Spleen (tissue), 13 donors: ENCODE measurements at regions of chr4 and their contacts with region 1.

Region 1: GRCh38 chr4:15231265-15232091 is 196.4 kb upstream of the C1QTNF7 start:
- DNase-seq: peak; percentile 83
- H3K4me3 ChIP-seq: no peak overlapping the region
- H3K27ac ChIP-seq: no peak overlapping the region
- H3K4me1 ChIP-seq: peaks cover 18 to 38% (median 28%) of the 10 kb centered on the region in 6 donors
- H3K27me3 ChIP-seq: no peaks in the 10 kb centered on the region
- CTCF ChIP-seq: peak; percentile 56 to 85 (median 75)
- POLR2A ChIP-seq: no peak

Region 2: GRCh38 chr4:15457406-15458201 is 226.1 kb after region 1 on chr4:
- intact Hi-C with region 1: loop called (anchors 5 kb)
- DNase-seq: no peak
- H3K4me3 ChIP-seq: peak overlapping the region in 1 of 8 donors; percentile 33
- H3K27ac ChIP-seq: peak overlapping the region in 4 of 8 donors; percentile 31 to 53 (median 44)
- H3K4me1 ChIP-seq: peaks cover 0 to 20% (median 12%) of the 10 kb centered on the region in 6 donors
- H3K27me3 ChIP-seq: no peaks in the 10 kb centered on the region
- CTCF ChIP-seq: peak; percentile 52 to 83 (median 73)
- POLR2A ChIP-seq: no peak

Region 3: DNA sequence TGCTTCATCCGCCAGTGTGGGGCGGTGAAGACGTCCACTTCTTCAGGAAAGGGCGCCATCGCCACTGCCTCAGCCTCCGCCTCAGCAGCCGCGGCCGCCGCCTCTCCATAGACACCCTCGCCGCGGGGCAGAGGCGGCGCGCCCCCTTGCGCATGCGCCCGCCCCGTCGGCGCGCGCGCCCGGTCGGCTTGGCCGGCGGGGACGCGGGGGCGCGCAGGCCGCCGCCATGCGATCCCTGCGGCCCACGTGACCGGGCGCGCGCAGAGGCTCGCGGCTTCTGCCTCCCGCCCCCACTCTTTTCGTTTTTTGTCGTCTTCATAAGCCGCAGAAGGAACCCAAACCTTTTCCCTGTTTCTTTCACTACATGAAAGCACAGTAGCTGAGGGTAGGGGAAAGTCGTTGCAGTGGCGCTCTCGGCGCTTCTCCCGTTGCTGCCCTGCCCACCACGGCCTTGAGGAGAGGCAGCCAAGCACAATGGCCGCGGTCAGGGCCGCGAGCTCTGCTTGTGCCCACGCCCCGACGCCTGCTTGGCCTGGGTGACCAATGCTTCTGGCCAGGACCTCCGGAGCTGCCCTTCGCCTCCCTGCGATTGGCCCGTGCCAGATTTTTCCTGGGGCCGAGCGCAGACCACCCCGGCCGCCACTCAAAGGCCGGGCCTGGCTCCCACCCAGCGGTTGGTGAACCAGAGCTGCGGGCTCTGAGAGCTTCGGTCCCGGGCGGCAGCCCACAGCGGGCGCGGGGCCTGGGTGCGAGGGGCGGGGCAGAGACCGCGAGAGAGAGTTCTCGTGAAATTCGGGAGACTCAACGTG is 424.0 kb after region 1 on chr4 and contains the start of gene FBXL5:
- intact Hi-C with region 1: loop called (anchors 10 kb)
- DNase-seq: peak; percentile 96
- H3K4me3 ChIP-seq: peak within 1 kb of the TSS; percentile 61 to 92 (median 77)
- H3K27ac ChIP-seq: peak within 1 kb of the TSS; percentile 97 to 99 (median 99)
- H3K4me1 ChIP-seq: peaks cover 30 to 79% (median 47%) of the 10 kb centered on the region in 6 donors
- H3K27me3 ChIP-seq: no peaks in the 10 kb centered on the region
- CTCF ChIP-seq: peak in 1 of 11 experiments; percentile 19
- POLR2A ChIP-seq: peak; percentile 23 to 84 (median 27)
- total RNA-seq, gene FBXL5: 98.2 to 210 (median 141) TPM